ENCODE measurements at regions of chr1 and their contacts with region 1.

Region 1: DNA sequence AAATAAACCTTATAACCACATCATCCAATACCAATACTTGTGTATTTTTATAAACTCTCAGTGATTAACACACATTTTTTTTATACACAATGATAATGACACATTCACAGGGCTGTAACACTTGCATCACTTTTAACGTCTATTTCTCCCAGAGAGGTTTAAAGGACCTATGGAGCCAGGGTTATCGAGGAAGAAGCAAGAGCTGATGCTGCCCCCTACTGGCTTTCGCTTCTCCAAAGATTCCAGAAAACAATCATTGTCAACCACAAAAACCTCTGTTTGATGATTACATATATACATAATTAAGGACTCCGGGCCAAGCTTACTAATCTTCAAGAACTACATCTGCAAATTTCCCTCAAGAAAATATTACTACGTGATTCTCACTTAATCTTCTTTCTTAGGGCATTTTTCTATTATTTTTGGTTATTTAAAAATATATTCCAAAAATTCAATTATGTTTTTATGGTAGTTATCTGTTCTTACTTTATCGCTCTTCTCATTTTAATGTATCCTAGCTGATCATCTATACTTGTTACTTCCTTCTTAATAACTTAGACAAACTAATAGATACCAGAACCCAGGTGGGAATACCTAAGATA is 214.5 kb downstream of the VAV3 start:
- DNase-seq: peak; percentile 73
- H3K4me3 ChIP-seq: no peak overlapping the region
- H3K27ac ChIP-seq: no peak overlapping the region
- H3K4me1 ChIP-seq: no peaks in the 10 kb centered on the region
- H3K27me3 ChIP-seq: no peaks in the 10 kb centered on the region
- CTCF ChIP-seq: peak; percentile 59 to 86

Region 2: GRCh38 chr1:107142140-107142542 is 608.3 kb before region 1 on chr1:
- CTCF ChIA-PET with region 1: no interaction called
- dilution Hi-C with region 1: no loop called
- in situ Hi-C with region 1: no loop called
- intact Hi-C with region 1: loop called (anchors 1 kb)
- DNase-seq: peak; percentile 49
- H3K4me3 ChIP-seq: peak overlapping the region; percentile 63 to 68 (median 64)
- H3K27ac ChIP-seq: no peak overlapping the region
- H3K4me1 ChIP-seq: peaks cover 34% of the 10 kb centered on the region
- H3K27me3 ChIP-seq: no peaks in the 10 kb centered on the region
- CTCF ChIP-seq: peak; percentile 51 to 56

Region 3: DNA sequence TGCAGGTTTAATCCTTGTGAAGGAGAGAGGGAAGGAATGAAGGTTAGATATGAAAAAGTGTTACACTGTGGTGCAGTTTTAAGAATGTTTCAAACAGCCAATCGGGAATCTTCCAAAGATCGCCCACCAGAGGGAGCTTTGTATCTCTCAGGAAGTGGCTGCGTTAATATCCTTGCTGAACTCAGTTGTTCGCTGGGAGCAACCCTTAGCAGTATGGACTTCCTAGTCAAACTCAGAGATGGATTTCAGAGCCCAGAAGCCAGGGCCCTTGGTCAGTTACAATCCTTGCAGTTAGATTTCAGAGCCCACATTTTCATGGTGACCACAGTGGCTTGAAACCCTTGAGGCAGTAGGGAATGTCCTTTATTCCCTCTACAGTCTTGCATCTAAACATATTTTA is 473.4 kb before region 1 on chr1:
- CTCF ChIA-PET with region 1: interaction called, 5 read pairs
- dilution Hi-C with region 1: no loop called
- in situ Hi-C with region 1: loop called (anchors 25 kb)
- intact Hi-C with region 1: loop called (anchors 1 kb)
- DNase-seq: peak; percentile 43
- H3K4me3 ChIP-seq: no peak overlapping the region
- H3K27ac ChIP-seq: no peak overlapping the region
- H3K4me1 ChIP-seq: peaks cover 4% of the 10 kb centered on the region
- H3K27me3 ChIP-seq: no peaks in the 10 kb centered on the region
- CTCF ChIP-seq: peak; percentile 36 to 58

Region 4: DNA sequence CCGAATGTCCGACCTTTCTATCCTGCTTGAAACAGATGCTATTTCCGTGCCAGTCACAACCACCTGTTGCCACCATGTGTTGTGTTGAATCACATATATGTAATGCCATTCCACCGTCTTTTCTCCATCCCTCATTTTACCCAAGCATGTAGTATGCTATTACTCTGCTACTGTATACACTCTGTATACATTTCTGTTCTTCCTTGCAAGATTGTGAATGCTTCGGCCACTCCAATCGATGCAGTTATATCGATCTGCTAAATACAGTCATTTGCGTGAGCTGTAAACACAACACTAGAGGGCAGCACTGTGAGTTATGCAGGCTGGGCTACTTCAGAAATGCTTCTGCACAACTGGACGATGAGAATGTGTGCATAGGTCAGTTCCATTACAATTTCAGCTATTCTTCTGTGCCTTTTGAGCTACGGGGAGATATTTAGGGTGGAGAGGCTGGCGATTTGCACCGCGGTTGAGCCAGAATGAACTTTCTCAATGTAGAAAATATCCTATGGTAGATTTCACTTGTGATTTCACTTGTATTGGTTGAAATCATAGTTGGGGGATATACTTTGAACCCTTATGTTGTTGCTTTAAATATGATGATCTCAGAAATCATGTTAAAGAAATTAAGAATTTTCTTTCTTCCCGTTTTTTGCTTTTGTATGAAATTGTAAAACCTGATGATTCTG is 319.8 kb before region 1 on chr1:
- CTCF ChIA-PET with region 1: interaction called, 6 read pairs
- dilution Hi-C with region 1: no loop called
- in situ Hi-C with region 1: loop called in 1 of 2 experiments (anchors 25 kb)
- intact Hi-C with region 1: loop called (anchors 1 kb)
- DNase-seq: peak; percentile 24
- H3K4me3 ChIP-seq: no peak overlapping the region
- H3K27ac ChIP-seq: no peak overlapping the region
- H3K4me1 ChIP-seq: no peaks in the 10 kb centered on the region
- H3K27me3 ChIP-seq: no peaks in the 10 kb centered on the region
- CTCF ChIP-seq: peak; percentile 84

Region 5: GRCh38 chr1:107572653-107573211 is 177.7 kb before region 1 on chr1:
- CTCF ChIA-PET with region 1: interaction called, 13 read pairs
- dilution Hi-C with region 1: no loop called
- in situ Hi-C with region 1: no loop called
- intact Hi-C with region 1: no loop called
- DNase-seq: peak; percentile 93
- H3K4me3 ChIP-seq: peak overlapping the region in 2 of 3 experiments; percentile 1 to 4
- H3K27ac ChIP-seq: no peak overlapping the region
- H3K4me1 ChIP-seq: peaks cover 20% of the 10 kb centered on the region
- H3K27me3 ChIP-seq: no peaks in the 10 kb centered on the region
- CTCF ChIP-seq: no peak